Right ventricle myocardium superior (tissue), 1 donor: ENCODE measurements at regions of chr10 and their contacts with region 1.

Region 1: GRCh38 chr10:48656241-48656913 is 28.3 kb upstream of the WDFY4 start:
- DNase-seq: peak; percentile 96
- ATAC-seq: peak; percentile 95

Region 2: DNA sequence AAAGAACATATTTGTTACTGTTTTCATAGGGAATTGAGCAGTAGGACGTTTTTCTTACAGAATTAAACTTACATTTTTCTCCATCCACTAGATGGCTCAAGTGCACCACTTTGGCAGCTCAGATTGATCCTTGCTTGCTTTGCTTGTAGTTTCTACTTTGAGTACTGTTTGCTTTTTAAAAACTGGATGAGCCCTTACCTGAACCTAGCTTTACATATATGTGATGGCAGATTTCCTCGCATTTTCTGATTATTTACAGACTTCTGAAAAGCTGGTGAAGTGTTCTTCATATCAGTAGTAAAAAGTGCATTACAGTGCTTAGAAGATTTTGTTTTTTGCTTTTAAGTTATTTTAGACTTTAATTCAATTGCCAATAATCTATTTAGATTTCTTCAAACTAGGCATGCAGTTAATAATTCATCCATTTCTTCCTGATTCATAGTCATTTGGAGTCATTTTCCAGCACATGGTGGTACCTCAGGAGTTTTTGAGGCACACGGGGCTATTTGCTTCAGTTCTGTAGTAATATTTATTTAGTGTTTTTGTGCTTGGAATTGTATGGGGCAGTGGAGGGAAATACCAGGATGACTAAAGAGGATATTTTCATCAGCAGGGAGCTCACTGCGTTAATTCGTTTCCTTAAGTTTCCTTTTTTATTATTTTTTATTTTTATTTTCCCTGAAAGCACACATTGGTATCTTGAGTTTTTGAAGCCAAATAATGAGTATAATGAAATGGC is 292.6 kb before region 1 on chr10:
- intact Hi-C with region 1: loop called (anchors 2 kb)
- DNase-seq: no peak
- ATAC-seq: peak; percentile 71

Region 3: GRCh38 chr10:48551861-48552591 is 104.4 kb before region 1 on chr10:
- intact Hi-C with region 1: loop called (anchors 2 kb)
- DNase-seq: peak; percentile 59
- ATAC-seq: peak; percentile 66

Region 4: DNA sequence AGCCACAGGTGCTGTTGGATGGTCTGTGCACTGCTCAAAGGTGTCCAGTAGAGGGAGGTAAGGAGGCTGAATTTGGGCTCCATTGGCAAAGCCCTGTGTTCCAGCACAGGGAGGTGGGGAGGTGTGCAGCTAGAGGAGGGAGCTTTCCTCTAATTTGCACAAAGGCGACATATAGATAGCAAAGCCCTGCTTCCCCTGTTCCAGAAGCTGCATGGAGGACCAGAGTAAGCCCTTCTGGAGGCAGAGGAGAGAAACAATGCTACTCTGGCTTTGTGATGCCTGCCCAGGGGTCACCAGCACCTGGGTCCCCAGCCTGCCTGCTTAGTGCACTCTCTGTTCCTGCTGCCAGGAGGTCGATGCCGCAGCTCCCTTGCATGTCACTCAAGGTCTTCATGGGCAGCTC is 48.1 kb before region 1 on chr10:
- intact Hi-C with region 1: loop called (anchors 10 kb)
- DNase-seq: no peak
- ATAC-seq: peak; percentile 48

Region 5: DNA sequence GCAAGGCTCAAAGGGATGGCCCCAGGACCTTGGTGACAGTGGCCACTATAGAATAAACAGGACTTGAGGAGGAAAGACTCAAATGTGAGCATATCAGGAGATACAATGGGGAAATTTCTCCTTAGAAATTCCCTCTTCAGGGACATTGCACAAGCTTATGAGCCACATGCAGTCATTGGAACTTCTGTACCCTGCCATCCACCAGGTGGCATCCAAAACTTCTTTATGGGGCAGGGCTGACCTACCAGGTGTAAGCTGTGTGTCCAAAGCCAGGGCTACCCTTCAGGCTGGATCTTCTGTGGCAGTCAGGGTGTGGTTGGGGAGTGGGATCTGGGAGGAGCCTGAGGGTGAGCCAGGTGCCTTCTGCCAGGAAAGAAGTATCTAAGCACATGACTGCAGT is 319.8 kb after region 1 on chr10:
- intact Hi-C with region 1: loop called (anchors 10 kb)
- DNase-seq: no peak
- ATAC-seq: peak; percentile 87

Region 6: GRCh38 chr10:49164559-49165188 is 508.3 kb after region 1 on chr10:
- intact Hi-C with region 1: loop called (anchors 10 kb)
- DNase-seq: peak; percentile 70
- ATAC-seq: peak; percentile 79